ENCODE measurements at regions of chr11 and their contacts with region 1.

Region 1: DNA sequence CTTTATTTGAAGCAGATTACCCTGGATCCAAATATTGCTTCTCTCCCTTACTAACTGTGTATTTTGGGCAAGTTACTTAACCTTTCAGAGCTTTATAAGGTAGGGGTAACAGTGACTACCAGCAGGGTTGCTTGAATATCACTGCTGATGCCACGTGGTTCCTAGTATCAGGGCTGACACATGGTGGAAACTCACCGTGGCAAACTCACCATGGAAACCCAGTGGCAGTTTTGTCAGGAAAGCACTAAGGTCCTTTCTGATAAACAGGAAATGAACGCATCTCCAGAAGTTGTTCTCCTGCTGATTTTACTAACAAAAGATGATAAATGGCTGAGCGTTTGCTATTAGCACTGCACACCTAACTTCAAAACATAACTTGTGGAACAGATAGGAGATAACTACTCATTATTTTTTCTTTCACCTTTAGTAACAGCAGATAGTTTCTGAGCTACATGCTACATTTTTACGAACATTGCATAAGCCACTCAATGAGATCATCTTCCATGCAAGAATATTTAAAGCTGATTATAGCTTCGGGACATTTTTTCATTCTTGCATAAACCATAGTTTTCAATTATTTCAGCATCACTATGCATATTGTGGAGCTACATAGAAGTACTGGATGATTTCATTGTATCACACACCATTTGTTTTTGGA is 59.7 kb upstream of the RAG2 start:
- DNase-seq: no peak
- H3K4me3 ChIP-seq: no peak overlapping the region
- CTCF ChIP-seq: no peak

Region 2: DNA sequence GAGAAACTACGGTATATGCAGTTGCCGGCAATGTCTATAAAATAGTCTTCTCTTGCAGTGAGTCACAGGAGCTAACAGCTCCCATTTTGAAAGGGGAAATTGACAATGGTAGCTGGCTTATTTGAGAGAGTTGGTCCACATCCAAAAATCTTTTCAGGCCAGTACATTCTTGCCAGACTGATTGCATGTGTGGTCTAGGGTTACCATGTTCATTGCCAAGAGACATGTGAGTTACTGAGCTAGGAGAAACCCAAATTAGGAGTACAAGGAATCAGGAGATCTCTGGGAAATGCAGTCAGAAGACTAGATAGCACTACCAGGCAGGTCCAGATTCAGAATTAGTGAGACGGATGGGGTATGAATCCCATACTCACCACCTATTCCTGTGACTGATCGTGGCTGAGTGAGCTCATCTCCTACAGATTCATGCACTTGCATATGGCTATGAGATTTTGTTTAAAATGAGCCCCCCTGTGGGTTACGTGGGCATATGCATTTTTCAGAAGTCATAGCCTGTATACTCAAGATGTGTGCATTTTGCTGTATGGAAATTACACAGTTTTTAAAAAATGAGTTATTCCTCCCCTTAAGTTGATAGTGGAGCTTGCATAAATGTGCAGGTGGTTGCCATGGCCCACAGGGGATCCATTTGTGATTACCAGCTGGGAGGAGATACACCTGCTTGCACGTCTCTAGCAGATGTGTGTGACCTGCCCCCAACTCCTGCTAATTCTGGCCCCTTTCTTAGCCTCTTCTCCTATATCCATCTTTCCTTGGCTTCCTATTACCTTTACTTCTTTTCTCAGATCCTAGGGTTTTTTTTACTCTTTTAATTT is 471.2 kb before region 1 on chr11:
- CTCF ChIA-PET with region 1: no interaction called
- POLR2A ChIA-PET with region 1: no interaction called
- DNase-seq: peak; percentile 61
- H3K4me3 ChIP-seq: no peak overlapping the region
- CTCF ChIP-seq: no peak

Region 3: DNA sequence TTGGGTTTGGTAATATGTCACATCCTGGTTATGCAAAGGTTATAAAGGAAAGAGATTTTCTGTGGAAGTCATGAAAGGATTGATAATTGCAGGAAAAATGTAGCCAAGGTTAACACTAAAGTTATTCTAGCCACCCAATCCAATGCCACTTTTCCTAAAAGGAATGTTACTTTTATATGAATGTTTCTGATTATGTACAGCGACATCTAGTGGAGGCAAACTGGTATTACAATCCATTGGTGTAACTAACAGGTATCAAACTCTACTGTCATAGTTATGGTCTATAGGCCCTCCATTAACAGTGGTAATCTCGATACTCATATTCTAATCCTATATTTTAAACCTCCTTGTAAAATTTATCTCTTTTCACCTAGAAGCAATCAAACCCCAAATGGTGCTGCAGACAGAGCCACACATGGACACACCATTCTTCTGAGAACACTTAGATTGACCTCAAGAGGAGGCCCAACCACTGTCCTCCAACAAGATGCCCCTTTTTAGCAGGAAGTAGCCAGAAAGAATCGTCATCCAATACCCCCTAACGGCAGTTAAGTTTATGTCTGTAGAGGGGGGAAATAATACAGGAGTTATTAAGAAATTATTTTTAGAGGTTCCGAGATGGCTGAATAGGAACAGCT is 15.2 kb after region 1 on chr11:
- CTCF ChIA-PET with region 1: interaction called, 16 read pairs
- POLR2A ChIA-PET with region 1: no interaction called
- DNase-seq: peak; percentile 7
- H3K4me3 ChIP-seq: no peak overlapping the region
- CTCF ChIP-seq: peak; percentile 52